MCF 10A (cell line): ENCODE measurements at regions of chr1 and their contacts with region 1.

Region 1: GRCh38 chr1:209277662-209278061 is 305.9 kb upstream of the CAMK1G start:
- DNase-seq: no peak
- H3K4me3 Mint-ChIP-seq: no peak overlapping the region
- H3K27ac Mint-ChIP-seq: no peak overlapping the region
- H3K4me1 Mint-ChIP-seq: no peaks in the 10 kb centered on the region
- H3K27me3 Mint-ChIP-seq: no peaks in the 10 kb centered on the region
- CTCF ChIP-seq: no peak

Region 2: GRCh38 chr1:209266590-209267172 is 11.0 kb before region 1 on chr1:
- CTCF ChIA-PET with region 1: no interaction called
- POLR2A ChIA-PET with region 1: interaction called, 11 read pairs
- intact Hi-C with region 1: no loop called
- DNase-seq: peak; percentile 55
- H3K4me3 Mint-ChIP-seq: peak overlapping the region; percentile 7
- H3K27ac Mint-ChIP-seq: no peak overlapping the region
- H3K4me1 Mint-ChIP-seq: peaks cover 10% of the 10 kb centered on the region
- H3K27me3 Mint-ChIP-seq: no peaks in the 10 kb centered on the region
- CTCF ChIP-seq: no peak